ENCODE measurements at regions of chr17 and their contacts with region 1.

Region 1: GRCh38 chr17:65100316-65101140 is 36.6 kb upstream of the RGS9 start:
- DNase-seq: peak; percentile 80 to 83
- ATAC-seq: peak; percentile 89 to 95
- H3K4me3 ChIP-seq: peak overlapping the region; percentile 55
- H3K27ac ChIP-seq: peak overlapping the region; percentile 75 to 87
- H3K4me1 ChIP-seq: peaks cover 25% of the 10 kb centered on the region
- CTCF ChIP-seq: peak; percentile 98
- EP300 ChIP-seq: no peak
- POLR2A ChIP-seq: peak; percentile 46
- RAD21 ChIP-seq: peak; percentile 69 to 95

Region 2: DNA sequence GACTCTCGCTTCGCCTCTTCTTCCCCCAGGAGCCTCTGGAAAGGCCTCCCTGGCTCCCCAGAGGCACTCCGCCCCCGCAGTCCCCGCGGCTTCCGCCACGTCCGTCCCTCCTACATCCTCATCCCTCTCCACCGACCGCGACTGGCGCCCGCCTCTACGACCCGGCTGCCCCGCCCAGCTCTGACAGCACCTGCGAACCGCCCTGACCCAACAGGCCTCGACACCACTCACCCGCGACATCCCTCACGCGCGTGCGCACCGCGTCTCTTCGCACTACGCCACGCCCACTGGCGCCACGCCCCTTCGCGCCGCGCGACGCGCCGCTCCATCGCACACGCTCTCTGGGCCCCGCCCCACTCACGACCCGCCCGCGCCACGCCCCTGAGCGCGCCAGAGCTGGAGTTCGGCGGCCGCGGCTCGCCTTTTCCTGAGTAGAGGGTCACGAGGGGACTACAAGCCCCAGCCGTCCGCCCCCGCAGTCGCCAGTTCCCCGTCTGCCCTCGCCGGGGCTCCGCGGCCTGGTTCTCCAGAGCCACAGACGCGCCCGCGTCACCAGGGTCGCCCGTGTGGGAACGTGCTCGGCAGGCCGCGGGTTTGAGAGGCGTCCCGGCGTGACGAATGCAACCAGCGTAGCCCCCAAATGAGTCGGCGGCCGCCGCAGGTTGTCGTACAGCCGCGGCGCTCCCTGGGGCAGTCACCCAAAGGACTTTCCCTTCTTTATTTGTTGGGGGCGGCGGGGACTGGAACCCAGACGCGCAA is 125.0 kb before region 1 on chr17:
- CTCF ChIA-PET with region 1: interaction called, 21 read pairs
- POLR2A ChIA-PET with region 1: interaction called, 35 read pairs
- DNase-seq: peak; percentile 96 to 98
- ATAC-seq: peak; percentile 92 to 96
- H3K4me3 ChIP-seq: peak overlapping the region; percentile 73
- H3K27ac ChIP-seq: peak overlapping the region; percentile 95 to 96
- H3K4me1 ChIP-seq: peaks cover 14% of the 10 kb centered on the region
- CTCF ChIP-seq: no peak
- EP300 ChIP-seq: no peak
- POLR2A ChIP-seq: peak; percentile 75
- RAD21 ChIP-seq: peak in 1 of 2 experiments; percentile 40; a peak in 2 of 5 replicates

Region 3: GRCh38 chr17:65017207-65017774 is 83.2 kb before region 1 on chr17:
- CTCF ChIA-PET with region 1: interaction called, 26 read pairs
- POLR2A ChIA-PET with region 1: interaction called, 5 read pairs
- DNase-seq: no peak
- ATAC-seq: peak; percentile 44 to 66; a peak in 3 of 6 replicates
- H3K4me3 ChIP-seq: peak overlapping the region; percentile 12; the same call in 1 of the 3 replicates
- H3K27ac ChIP-seq: peak overlapping the region; percentile 78
- H3K4me1 ChIP-seq: peaks cover 73% of the 10 kb centered on the region
- CTCF ChIP-seq: no peak
- EP300 ChIP-seq: no peak
- POLR2A ChIP-seq: no peak
- RAD21 ChIP-seq: no peak

Region 4: DNA sequence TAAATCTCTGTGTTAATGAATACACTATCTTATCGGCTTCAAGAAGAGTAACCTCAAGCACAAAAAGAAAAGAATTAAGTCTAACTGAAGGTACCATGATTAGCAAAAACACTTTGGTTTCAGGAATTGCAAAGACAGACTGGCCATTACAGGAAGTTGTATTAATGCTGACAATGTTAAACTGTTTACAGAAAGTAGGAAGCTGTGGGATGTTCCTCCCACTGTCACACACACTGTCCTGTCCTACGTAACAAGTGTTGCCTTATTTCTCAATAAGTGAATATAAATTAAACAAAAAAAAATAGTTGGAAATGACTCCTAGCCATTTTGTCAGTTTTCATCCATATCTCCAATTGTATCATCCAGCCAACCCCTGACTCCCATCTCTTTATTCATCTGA is 52.6 kb before region 1 on chr17:
- CTCF ChIA-PET with region 1: interaction called, 44 read pairs
- POLR2A ChIA-PET with region 1: no interaction called
- DNase-seq: no peak
- ATAC-seq: no peak
- H3K4me3 ChIP-seq: no peak overlapping the region
- H3K27ac ChIP-seq: no peak overlapping the region
- H3K4me1 ChIP-seq: peaks cover 12% of the 10 kb centered on the region; the same call in 2 of the 3 replicates
- CTCF ChIP-seq: no peak
- EP300 ChIP-seq: no peak
- POLR2A ChIP-seq: no peak
- RAD21 ChIP-seq: no peak

Region 5: DNA sequence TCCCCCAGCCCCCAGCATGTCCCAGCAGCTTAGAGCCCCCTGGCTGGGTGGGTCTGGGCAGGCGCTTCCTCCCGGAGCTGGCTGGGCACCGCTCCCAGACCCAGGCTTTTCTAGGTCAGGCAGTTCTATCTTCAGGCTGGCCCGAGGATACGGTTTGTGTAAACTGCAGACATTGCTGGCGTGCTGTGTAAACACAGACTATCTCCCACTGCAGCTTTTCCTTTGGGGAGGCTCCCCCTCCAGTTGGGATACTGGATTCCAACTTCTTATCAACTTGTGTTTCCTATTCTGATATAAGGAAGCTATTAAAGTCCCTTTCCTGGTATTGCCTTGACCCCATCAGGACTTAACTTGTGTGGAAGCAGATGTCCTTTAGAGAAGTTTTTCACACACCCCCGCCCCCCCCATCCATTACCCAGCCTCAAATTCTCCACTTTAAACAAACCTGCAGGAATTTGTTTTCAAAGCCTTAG is 25.7 kb before region 1 on chr17:
- CTCF ChIA-PET with region 1: interaction called, 145 read pairs
- POLR2A ChIA-PET with region 1: interaction called, 23 read pairs
- DNase-seq: peak; percentile 49 to 73
- ATAC-seq: peak; percentile 67 to 80
- H3K4me3 ChIP-seq: no peak overlapping the region
- H3K27ac ChIP-seq: peak overlapping the region; percentile 65 to 88
- H3K4me1 ChIP-seq: peaks cover 59% of the 10 kb centered on the region
- CTCF ChIP-seq: no peak
- EP300 ChIP-seq: no peak
- POLR2A ChIP-seq: no peak
- RAD21 ChIP-seq: peak; percentile 40 to 44; a peak in 4 of 5 replicates

Region 6: DNA sequence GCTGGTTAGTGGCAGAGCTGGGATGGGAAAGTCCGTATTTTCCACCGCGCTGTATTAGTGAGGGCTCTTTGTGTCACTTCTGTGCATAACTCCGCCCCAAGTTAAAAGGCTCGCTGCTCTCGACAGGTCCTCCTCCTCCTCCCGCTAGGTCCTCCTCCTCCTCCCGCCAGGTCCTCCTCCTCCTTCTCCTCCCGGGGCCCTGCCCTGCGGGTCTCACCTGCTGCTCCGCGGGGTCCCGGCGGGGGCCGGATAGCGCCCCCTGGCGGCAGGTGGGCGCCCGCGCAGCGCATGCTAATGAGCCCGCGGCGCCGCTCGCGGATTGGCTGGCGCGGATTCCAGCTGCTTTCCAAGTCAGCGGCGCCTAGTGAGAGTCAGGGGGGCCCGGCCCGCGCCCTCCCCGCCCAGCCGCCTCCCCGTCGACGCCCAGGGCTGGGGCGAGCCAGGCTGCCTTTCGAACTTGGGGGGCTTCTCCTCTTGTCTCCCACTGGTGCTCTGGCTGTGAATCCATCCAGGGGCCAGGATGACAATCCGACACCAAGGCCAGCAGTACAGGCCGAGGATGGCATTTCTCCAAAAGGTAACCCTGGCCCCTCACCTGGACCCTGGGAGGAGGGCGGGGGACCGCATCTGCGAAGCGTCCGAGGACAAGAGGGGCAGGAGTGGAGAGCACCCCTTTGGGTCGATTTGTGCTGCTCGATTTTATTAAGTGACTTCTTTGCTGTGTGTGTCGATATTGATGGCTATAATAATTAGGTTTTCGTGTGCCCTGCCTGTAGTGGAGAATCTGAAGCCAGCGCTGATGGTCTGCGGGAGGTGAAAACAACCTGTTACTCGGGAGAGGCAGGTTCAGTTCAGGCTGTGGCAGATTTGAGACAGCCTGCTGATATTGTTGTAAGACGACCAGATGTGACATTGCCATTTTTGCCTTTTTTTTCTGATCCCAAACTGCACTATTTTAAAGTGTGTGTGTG is 36.8 kb after region 1 on chr17 and contains the start of gene RGS9:
- CTCF ChIA-PET with region 1: interaction called, 88 read pairs
- POLR2A ChIA-PET with region 1: interaction called, 3 read pairs
- DNase-seq: peak; percentile 77 to 87
- ATAC-seq: peak; percentile 93 to 97
- H3K4me3 ChIP-seq: peak within 1 kb of the TSS; percentile 39
- H3K27ac ChIP-seq: peak within 1 kb of the TSS; percentile 40 to 61
- H3K4me1 ChIP-seq: no peaks in the 10 kb centered on the region
- CTCF ChIP-seq: peak; percentile 99
- EP300 ChIP-seq: no peak
- POLR2A ChIP-seq: no peak
- RAD21 ChIP-seq: peak; percentile 65 to 84
- polyA plus RNA-seq, gene RGS9: 11.2 and 14.3 TPM in 2 replicates

Region 7: GRCh38 chr17:65208717-65209116 is 108.2 kb after region 1 on chr17:
- CTCF ChIA-PET with region 1: no interaction called
- POLR2A ChIA-PET with region 1: no interaction called
- DNase-seq: no peak
- ATAC-seq: no peak
- H3K4me3 ChIP-seq: no peak overlapping the region
- H3K27ac ChIP-seq: no peak overlapping the region
- H3K4me1 ChIP-seq: no peaks in the 10 kb centered on the region
- CTCF ChIP-seq: no peak
- EP300 ChIP-seq: no peak
- POLR2A ChIP-seq: no peak
- RAD21 ChIP-seq: no peak

Region 8: DNA sequence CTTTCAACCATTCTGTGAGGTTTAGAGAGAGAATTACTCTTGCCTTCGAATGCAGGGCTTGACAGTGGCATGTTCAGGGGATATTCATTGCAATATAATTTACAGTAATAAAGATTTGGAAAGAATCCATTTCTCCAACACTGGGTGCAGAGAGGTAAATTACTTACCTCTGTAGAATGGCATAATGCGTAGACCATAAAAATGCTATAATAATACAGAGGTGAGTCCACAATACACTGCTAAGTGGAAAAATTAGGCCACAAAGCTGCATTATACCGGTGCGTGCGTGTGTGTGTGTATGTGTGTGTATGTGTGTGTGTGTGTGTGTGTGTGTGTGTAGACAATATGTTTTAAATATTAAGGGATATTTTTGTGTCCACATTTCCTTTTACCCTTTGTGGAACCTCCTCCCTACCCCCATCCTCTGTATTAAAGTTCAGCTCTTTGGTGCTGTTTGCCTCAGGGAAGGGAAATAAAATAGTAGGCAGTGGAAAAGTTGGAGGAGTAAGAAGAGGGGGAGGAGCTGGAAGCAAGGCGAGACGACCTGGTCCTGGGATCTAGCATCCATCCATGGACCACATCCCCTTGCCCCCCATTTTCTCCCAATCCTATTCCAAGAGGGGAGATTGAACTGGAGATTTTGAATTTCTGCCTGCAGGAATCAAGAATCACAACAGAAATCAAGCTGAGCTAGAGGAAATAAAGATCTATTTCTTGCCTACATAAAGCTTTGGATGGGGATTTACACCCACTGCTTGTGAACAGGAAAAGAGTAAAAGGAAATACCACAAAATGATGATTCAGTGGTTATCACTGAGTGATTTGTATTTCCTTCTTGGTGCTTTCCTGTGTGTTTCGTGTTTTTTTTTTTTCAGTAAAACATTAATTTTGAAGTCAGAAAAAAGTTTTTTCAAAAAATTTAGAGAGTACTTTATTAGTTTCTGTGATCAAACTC is 161.4 kb after region 1 on chr17:
- CTCF ChIA-PET with region 1: no interaction called
- POLR2A ChIA-PET with region 1: no interaction called
- DNase-seq: no peak
- ATAC-seq: no peak
- H3K4me3 ChIP-seq: no peak overlapping the region
- H3K27ac ChIP-seq: no peak overlapping the region
- H3K4me1 ChIP-seq: no peaks in the 10 kb centered on the region
- CTCF ChIP-seq: no peak
- EP300 ChIP-seq: no peak
- POLR2A ChIP-seq: no peak
- RAD21 ChIP-seq: no peak

Measured in A549 (cell line).